Posterior cingulate gyrus (tissue), 11 donors: ENCODE measurements at regions of chr3 and their contacts with region 1.

Region 1: GRCh38 chr3:137013955-137014688 is 56.3 kb downstream of the IL20RB start:
- DNase-seq: peak; percentile 81 to 99 (median 96)

Region 2: GRCh38 chr3:136390574-136390973 is 623.5 kb before region 1 on chr3:
- intact Hi-C with region 1: loop called (anchors 1 kb)
- DNase-seq: no peak

Region 3: DNA sequence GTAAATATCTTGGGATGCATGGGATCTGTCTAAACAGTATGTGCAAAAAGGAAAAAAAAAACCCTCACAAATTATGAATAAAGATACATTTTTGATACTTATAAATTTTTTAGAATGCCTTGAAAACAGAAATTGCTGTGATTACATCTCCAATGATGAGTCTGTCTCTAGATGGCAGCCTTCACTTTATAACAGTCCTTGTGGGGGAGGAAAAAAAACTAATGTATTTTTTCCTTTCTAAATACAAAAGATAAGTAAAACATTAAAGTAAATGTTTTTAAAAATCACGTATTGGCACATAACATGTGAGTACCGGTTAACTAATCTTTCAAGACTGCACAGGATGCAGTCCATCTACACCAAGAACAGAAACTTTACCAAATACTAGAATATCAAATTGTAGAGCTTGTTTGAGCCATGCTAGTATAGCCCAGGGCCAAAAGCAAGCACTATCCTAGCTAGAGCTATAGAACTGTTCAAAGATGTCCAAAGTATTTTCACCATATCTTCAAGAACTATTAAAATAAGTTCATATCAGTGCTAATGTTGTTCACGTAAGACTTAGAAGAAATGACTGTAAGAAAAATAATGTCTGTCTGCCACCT is 468.4 kb before region 1 on chr3:
- intact Hi-C with region 1: loop called (anchors 2 kb)
- DNase-seq: no peak

Region 4: DNA sequence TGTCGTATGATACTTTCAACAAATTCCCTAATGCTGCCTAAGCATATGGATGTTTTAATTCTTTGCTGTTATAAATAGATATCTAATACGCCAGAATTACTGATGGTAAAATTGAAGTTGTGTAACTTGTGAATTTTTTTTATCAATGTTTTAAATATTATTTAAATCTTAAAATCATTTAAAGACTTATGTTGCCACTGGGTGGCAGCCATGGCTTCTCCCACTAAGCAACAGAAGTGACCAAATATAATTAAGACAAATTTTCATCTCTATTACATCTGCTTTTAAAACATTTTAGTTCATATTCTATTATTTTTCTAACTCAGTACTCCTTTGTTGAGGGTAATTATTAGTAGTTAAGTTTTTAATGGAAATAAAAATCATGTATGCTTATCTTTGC is 64.4 kb before region 1 on chr3:
- intact Hi-C with region 1: loop called (anchors 5 kb)
- DNase-seq: no peak